ENCODE measurements at regions of chr2 and their contacts with region 1.

Region 1: DNA sequence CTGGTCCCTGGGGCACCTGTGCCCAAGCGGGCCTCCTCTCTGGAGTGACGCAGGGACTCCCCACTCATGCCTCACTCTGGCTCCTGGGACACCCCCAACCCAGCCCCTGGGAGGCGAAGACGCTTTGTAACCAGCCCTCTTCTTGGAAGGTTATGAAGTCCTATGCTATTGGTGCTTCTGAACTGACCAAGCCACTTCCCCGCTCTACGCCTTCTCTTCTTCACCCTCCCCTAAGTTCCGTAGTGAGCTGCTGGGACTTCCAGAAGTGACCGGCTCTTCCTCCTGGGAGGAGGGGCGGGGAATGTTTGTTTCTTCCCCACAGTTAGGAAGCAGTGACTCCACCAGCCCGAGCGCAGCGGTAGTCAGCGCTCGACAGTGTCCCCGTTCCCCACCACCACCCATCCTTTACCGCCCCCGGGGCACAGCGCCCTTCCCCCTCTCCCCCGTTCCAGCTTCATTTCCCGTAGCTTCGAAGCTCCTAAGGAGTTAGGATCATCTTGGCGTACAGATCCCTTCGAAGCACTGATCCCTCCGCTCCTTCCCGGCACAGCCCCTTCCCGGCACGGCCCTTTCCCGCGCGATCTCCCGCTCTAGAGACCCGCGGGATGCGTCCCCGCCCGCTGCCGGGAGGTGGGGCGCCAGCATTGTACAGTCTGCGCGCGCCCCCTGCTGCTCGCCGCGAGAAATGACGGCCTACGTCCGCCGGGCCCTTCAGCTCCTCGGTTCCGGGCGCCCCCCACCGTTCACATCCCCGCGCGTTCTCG is 25.3 kb upstream of the NOTO start:
- DNase-seq: peak; percentile 87
- H3K4me3 ChIP-seq: peak overlapping the region; percentile 13 to 42 (median 18)
- H3K27ac ChIP-seq: peak overlapping the region; percentile 11
- H3K4me1 ChIP-seq: peaks cover 32% of the 10 kb centered on the region
- H3K27me3 ChIP-seq: peaks cover 7 to 14% of the 10 kb centered on the region in 2 experiments
- CTCF ChIP-seq: peak; percentile 98 to 99
- POLR2A ChIP-seq: no peak

Region 2: GRCh38 chr2:72862239-72862988 is 314.6 kb before region 1 on chr2:
- CTCF ChIA-PET with region 1: interaction called, 13 read pairs
- POLR2A ChIA-PET with region 1: no interaction called
- dilution Hi-C with region 1: no loop called
- intact Hi-C with region 1: no loop called
- DNase-seq: peak; percentile 92
- H3K4me3 ChIP-seq: no peak overlapping the region
- H3K27ac ChIP-seq: no peak overlapping the region
- H3K4me1 ChIP-seq: peaks cover 6% of the 10 kb centered on the region
- H3K27me3 ChIP-seq: peaks cover 8 to 26% of the 10 kb centered on the region in 2 experiments
- CTCF ChIP-seq: peak; percentile 98 to 100
- POLR2A ChIP-seq: no peak

Region 3: DNA sequence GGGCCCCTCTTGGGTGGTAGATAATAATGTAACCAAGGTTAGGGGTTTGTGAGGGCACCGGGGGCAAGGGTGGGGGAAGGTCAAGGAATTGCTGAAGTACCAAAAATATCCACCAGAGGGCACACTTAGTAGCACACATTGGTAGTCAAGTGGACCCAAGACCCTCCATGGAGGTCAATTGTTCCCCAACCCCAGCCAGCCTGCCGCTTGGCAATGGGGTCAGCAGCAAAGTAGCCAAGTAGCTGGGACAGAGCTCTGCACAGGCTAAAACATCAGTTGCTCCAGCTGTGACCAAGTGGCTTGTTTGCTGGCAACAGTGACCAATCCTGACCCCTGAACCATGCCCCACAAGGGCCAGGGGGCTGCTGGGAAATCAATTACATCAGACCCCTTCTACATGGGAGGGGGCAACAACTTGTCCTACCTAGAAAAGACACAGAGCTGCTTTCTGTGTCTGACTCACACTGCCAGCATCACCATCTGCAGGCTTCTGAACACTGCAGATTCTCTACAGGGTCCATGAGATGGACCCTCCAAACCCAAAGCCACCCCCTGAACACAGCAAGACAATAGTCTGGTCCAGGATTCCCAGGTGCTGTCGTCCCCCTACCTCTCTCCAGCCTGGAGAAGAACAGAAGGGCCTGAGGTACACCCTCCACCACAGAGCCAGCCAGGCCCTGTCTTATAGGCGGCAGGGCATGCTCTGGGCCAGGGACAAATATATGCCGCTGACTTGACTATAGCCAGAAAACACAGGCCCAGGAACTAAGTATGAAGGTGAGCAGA is 183.7 kb before region 1 on chr2:
- CTCF ChIA-PET with region 1: interaction called, 45 read pairs
- POLR2A ChIA-PET with region 1: no interaction called
- dilution Hi-C with region 1: no loop called
- intact Hi-C with region 1: loop called (anchors 1 kb)
- DNase-seq: peak; percentile 51
- H3K4me3 ChIP-seq: no peak overlapping the region
- H3K27ac ChIP-seq: no peak overlapping the region
- H3K4me1 ChIP-seq: no peaks in the 10 kb centered on the region
- H3K27me3 ChIP-seq: no peaks in the 10 kb centered on the region
- CTCF ChIP-seq: peak; percentile 57 to 70
- POLR2A ChIP-seq: no peak

Region 4: GRCh38 chr2:73112913-73113633 is 64.0 kb before region 1 on chr2 and contains the start of gene RAB11FIP5:
- CTCF ChIA-PET with region 1: interaction called, 19 read pairs
- POLR2A ChIA-PET with region 1: no interaction called
- dilution Hi-C with region 1: no loop called
- intact Hi-C with region 1: no loop called
- DNase-seq: peak; percentile 70
- H3K4me3 ChIP-seq: peak within 1 kb of the TSS; percentile 73 to 76 (median 74)
- H3K27ac ChIP-seq: peak within 1 kb of the TSS; percentile 60
- H3K4me1 ChIP-seq: peaks cover 16% of the 10 kb centered on the region
- H3K27me3 ChIP-seq: no peaks in the 10 kb centered on the region
- CTCF ChIP-seq: no peak
- POLR2A ChIP-seq: peak; percentile 55
- total RNA-seq, gene RAB11FIP5: 47.0 and 49.4 TPM in 2 replicates

Region 5: GRCh38 chr2:73187549-73187948 is 10.5 kb after region 1 on chr2:
- CTCF ChIA-PET with region 1: interaction called, 11 read pairs
- POLR2A ChIA-PET with region 1: no interaction called
- dilution Hi-C with region 1: no loop called
- intact Hi-C with region 1: no loop called
- DNase-seq: no peak
- H3K4me3 ChIP-seq: no peak overlapping the region
- H3K27ac ChIP-seq: no peak overlapping the region
- H3K4me1 ChIP-seq: no peaks in the 10 kb centered on the region
- H3K27me3 ChIP-seq: peaks cover 25 to 35% of the 10 kb centered on the region in 2 experiments
- CTCF ChIP-seq: no peak
- POLR2A ChIP-seq: no peak

Region 6: DNA sequence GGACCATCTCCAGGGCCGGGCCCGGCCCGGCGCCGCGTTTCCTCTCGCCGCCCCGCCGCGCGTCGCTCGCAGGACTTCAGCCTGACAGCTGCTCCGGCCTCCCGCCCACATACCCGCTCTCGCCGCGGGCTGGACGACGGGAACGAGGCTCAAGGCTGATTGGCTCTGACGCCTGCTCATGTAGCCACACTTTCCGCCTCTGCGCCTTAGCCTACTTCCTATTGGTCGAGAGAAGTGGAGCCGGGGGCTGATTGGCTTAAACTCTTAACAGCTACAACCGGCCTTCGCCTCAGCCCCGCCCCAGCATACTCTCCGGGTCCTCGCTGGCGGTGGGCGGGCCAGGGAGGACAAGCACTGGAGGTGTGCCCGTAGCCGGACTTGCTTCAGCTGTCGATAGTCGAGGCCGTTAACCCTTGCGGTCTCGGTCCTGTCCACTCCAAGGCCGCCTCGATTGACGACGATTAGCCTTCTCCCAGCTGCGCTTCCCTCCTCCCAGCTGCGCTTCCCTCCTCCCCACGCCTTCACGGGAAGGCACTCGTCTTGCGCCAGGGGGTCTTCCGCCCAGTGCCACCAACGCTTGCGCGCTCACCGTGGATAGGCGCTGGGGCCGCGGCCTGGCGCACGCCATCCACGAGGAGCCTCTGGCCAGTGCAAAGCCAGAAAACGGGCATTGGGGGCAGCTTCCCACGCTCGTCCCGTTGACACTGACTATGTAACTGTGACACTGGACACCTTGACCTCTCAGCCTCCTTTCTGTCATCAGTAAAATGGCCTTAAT is 56.3 kb after region 1 on chr2 and contains the start of gene PRADC1:
- CTCF ChIA-PET with region 1: interaction called, 5 read pairs
- POLR2A ChIA-PET with region 1: no interaction called
- dilution Hi-C with region 1: no loop called
- intact Hi-C with region 1: loop called (anchors 1 kb)
- DNase-seq: peak; percentile 100
- H3K4me3 ChIP-seq: peak within 1 kb of the TSS; percentile 76 to 90 (median 85)
- H3K27ac ChIP-seq: peak within 1 kb of the TSS; percentile 84
- H3K4me1 ChIP-seq: peaks cover 21% of the 10 kb centered on the region
- H3K27me3 ChIP-seq: no peaks in the 10 kb centered on the region
- CTCF ChIP-seq: no peak
- POLR2A ChIP-seq: no peak
- total RNA-seq, gene PRADC1: 19.6 and 21.8 TPM in 2 replicates